Dendritic cell treated with granulocyte-macrophage colony-stimulating factor and Interleukin-4, amounts not matched to agents 40 ng/mL and 50 ng/mL, for 4 days (primary cell): ENCODE measurements at regions of chr9 and their contacts with region 1.

Region 1: DNA sequence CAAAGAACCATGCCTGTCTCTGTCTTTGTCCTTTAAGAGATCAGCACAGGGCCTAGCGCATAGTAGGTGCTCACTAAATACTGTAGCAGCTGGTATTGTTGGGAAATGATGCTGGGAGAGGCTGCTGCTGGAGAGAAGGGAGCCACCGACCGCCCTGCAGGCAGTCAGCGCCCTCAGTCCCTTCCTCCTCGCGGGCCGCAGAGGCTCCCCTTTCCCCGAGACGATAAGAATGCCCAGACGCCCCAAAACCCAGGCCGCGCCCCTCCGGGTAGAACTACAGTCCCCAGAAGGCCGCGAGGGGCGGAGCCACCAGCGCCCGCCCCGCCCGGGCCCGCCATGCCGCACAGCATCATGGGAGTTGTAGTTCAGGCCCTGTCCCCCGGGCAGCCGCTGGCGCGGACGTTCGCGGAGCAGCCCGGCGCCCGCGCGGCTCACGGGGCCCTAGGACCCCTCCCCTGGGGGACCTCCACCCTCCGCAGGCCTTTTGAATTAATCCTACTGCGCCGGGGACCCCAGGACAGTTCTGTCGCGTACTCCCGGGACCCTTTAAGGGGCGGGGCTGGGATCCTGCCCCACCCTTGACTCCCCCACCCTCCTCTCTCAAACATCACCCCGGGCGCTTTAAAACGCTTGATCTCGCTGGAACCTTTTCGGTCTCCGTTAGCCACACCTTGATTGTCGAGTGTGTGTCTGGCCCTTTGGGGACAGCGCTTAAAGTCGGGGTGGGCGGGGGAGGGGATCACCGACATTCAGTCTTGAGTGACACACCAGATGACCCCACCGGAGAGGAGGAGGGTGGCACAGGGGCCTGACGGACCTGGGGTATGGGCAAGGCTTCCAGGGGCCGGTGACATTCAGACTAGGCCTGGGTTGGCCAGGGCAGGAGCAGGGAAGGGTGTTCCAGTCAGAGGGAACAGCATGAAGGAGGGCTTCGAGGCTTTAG is 24.8 kb upstream of the IER5L start:
- H3K4me3 Mint-ChIP-seq: peak overlapping the region; percentile 85
- H3K27ac Mint-ChIP-seq: peak overlapping the region; percentile 95
- H3K4me1 Mint-ChIP-seq: peaks cover 36% of the 10 kb centered on the region
- H3K27me3 Mint-ChIP-seq: peaks cover 14% of the 10 kb centered on the region

Region 2: GRCh38 chr9:129262261-129262660 is 59.4 kb after region 1 on chr9:
- intact Hi-C with region 1: loop called (anchors 10 kb)
- H3K4me3 Mint-ChIP-seq: no peak overlapping the region
- H3K27ac Mint-ChIP-seq: peak overlapping the region; percentile 90
- H3K4me1 Mint-ChIP-seq: peaks cover 61% of the 10 kb centered on the region
- H3K27me3 Mint-ChIP-seq: peaks cover 30% of the 10 kb centered on the region

Region 3: GRCh38 chr9:131138676-131139075 is 1935.8 kb after region 1 on chr9:
- intact Hi-C with region 1: no loop called
- H3K4me3 Mint-ChIP-seq: no peak overlapping the region
- H3K27ac Mint-ChIP-seq: no peak overlapping the region
- H3K4me1 Mint-ChIP-seq: no peaks in the 10 kb centered on the region
- H3K27me3 Mint-ChIP-seq: no peaks in the 10 kb centered on the region